GM12878 (cell line): ENCODE measurements at regions of chr2 and their contacts with region 1.

Region 1: DNA sequence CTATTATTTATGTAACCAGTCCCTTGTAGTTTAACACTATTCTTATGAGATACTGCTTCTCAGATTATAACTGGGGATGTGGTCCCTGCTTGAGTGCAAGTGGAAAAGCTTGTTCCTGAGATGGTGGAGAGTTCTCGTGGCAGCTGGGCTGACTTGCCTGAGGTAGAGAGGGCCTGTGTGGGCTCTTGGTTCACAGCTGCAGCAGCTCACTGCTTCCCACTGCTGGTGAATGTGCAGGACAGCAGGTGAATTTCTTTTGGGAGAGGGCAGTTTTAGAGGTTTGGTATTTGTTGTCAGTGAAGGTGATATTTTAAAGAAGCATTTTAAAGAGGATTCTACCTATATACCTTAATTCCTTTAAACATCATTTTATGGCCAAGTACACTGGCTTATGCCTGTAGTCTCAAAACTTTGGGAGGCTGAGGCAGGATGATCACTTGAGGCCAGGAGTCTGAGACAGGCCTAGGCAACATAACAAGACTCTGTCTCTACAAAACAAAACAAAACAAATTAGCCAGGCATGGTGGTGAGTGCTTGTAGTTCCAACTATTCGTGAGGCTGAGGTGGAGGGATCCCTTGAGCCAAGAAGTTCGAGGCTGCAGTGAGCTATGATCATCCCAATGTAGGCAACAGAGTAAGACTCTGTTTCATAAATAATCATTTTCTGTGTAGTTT is 94.8 kb downstream of the MTA3 start:
- DNase-seq: peak; percentile 46
- ATAC-seq: peak; percentile 96
- H3K4me3 ChIP-seq: no peak overlapping the region
- H3K27ac ChIP-seq: no peak overlapping the region; the same call in 1 of the 2 replicates
- H3K4me1 ChIP-seq: peaks cover 3% of the 10 kb centered on the region; the same call in 1 of the 2 replicates
- H3K27me3 ChIP-seq: no peaks in the 10 kb centered on the region
- CTCF ChIP-seq: peak; percentile 98 to 99 (median 99)
- EP300 ChIP-seq: no peak
- POLR2A ChIP-seq: no peak
- RAD21 ChIP-seq: peak; percentile 98

Region 2: DNA sequence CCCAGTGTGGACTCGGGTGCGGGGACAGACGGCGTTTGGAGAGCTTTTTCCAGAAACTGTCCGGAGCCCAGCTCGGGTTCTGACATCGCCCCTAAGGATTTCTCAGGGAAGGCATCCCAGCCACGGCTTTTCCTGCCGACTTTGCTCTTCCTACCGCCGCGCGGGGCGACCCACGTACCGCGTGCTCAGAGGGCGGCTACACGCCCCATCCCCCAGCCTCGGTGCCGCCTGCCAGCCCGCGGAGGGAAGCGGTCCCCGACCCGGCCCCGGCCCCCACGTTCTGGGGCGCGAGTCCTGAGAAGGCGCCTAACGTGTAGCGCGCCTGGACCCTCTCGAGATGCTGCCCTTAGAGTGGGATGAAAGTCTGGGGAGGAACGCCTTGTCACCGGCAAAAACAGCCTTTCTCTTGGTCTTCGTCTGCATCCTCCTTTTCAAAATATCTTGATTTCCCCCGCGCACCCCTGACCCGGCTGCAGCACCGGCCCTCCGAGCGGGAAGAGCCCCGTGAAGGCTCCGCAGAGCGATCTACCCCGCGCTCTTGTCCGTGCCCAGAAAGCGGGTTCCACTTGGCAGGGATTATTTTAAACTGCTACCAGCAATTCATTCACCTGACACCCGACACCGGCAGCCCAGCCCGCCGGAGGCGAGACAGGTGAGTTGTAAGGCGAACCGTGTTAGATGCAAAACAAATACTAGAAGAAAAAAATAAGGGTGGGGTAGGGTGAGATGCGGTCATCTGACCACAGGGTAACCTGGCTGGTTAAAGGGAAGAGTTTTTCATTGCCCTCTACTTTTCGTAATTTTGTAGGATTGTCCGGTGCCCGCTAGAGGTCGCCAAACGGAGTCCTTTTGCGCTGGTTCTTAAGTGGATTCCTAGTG is 168.6 kb before region 1 on chr2:
- CTCF ChIA-PET with region 1: interaction called, 63 read pairs
- POLR2A ChIA-PET with region 1: interaction called, 3 read pairs
- RAD21 ChIA-PET with region 1: interaction called, 25 read pairs
- SMC1A ChIA-PET with region 1: interaction called, 62 read pairs
- in situ Hi-C with region 1: loop called (anchors 5 kb)
- intact Hi-C with region 1: loop called (anchors 1 kb)
- DNase-seq: peak; percentile 35
- ATAC-seq: peak; percentile 90
- H3K4me3 ChIP-seq: peak overlapping the region; percentile 76
- H3K27ac ChIP-seq: no peak overlapping the region
- H3K4me1 ChIP-seq: no peaks in the 10 kb centered on the region
- H3K27me3 ChIP-seq: peaks cover 3 to 13% of the 10 kb centered on the region in 2 experiments
- CTCF ChIP-seq: peak; percentile 83 to 90 (median 89)
- EP300 ChIP-seq: no peak
- POLR2A ChIP-seq: no peak
- RAD21 ChIP-seq: peak; percentile 91

Region 3: DNA sequence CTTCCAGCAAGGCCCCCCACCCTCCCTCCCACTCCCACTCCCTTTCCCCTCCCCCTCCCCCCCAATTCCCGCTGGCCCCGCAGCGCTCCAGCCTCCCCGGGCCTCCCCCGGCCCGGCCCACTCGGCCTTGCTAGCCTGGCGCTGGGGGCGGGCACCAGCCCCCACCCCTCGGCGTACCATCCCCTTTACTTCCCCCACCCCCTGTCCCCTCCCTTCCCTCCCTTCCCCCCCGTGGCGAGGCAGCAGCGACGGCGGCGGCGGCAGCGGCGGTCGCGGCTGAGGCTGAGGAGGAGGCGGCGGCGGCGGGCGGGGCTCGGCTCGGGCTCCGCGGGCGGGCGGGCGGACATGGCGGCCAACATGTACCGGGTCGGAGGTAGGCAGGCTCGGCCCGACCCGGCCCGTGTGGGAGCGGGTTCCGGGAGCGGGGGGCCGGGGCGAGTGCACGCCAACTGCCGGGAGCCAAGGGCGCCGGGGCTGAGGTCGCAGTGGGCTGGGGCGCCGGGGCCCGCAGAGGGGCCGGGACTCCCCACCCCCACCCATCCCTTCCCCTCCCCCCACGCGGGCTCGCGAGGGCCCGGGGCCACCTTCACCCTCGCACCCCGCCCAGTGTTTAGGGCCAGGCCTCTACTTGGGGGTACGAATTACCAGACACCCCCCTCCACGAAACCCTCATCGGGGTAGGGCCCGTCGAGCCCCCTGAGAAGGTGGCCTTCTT is 94.7 kb before region 1 on chr2 and contains the start of gene MTA3:
- CTCF ChIA-PET with region 1: interaction called, 12 read pairs
- POLR2A ChIA-PET with region 1: interaction called, 4 read pairs
- RAD21 ChIA-PET with region 1: interaction called, 7 read pairs
- SMC1A ChIA-PET with region 1: interaction called, 8 read pairs
- in situ Hi-C with region 1: no loop called
- intact Hi-C with region 1: no loop called
- DNase-seq: no peak
- ATAC-seq: peak; percentile 79
- H3K4me3 ChIP-seq: peak within 1 kb of the TSS; percentile 76
- H3K27ac ChIP-seq: peak within 1 kb of the TSS; percentile 80
- H3K4me1 ChIP-seq: peaks cover 24% of the 10 kb centered on the region
- H3K27me3 ChIP-seq: no peaks in the 10 kb centered on the region
- CTCF ChIP-seq: no peak
- EP300 ChIP-seq: no peak
- POLR2A ChIP-seq: peak; percentile 63; the same call in 1 of the 2 replicates
- RAD21 ChIP-seq: no peak
- polyA plus RNA-seq, gene MTA3: 17.6 to 21.5 TPM

Region 4: DNA sequence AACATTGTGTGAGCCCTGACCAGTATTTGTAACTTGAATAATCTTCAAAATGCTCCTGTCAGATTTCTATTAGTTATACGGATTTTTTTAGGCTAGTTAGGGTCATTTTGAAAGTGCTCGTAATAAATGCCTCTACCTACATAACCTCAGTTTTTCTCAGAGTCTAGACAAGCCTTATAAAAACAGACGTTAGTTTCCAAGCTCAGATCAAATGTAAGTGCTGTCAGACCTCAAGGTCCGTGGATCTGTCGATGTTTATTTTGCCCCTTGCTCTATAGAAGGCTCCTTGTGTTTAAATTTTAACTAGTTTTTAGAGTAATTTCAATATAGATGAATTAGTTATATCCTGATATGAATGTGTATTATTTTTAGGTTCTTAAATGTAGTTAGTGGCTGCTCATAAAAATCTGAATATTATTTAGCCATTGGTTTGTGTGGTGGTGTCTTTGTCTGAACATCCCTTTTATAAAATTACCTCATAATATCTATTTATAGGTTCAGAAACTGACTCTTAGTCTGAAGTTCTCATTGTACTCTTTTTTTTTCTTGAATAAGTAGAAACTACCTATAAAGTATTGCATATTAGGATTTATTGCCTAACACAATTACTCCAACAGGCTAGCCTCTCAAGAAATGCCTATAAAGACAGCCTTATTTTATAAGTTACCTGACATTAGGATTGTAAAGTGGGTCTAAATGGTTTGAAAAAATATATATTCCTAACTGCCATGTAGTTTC is 23.7 kb before region 1 on chr2:
- CTCF ChIA-PET with region 1: interaction called, 22 read pairs
- POLR2A ChIA-PET with region 1: interaction called, 4 read pairs
- RAD21 ChIA-PET with region 1: interaction called, 21 read pairs
- SMC1A ChIA-PET with region 1: interaction called, 24 read pairs
- in situ Hi-C with region 1: no loop called
- intact Hi-C with region 1: no loop called
- DNase-seq: no peak
- ATAC-seq: peak; percentile 81
- H3K4me3 ChIP-seq: no peak overlapping the region
- H3K27ac ChIP-seq: peak overlapping the region; percentile 43; the same call in 1 of the 2 replicates
- H3K4me1 ChIP-seq: peaks cover 4% of the 10 kb centered on the region
- H3K27me3 ChIP-seq: no peaks in the 10 kb centered on the region
- CTCF ChIP-seq: no peak
- EP300 ChIP-seq: no peak
- POLR2A ChIP-seq: no peak
- RAD21 ChIP-seq: no peak

Region 5: DNA sequence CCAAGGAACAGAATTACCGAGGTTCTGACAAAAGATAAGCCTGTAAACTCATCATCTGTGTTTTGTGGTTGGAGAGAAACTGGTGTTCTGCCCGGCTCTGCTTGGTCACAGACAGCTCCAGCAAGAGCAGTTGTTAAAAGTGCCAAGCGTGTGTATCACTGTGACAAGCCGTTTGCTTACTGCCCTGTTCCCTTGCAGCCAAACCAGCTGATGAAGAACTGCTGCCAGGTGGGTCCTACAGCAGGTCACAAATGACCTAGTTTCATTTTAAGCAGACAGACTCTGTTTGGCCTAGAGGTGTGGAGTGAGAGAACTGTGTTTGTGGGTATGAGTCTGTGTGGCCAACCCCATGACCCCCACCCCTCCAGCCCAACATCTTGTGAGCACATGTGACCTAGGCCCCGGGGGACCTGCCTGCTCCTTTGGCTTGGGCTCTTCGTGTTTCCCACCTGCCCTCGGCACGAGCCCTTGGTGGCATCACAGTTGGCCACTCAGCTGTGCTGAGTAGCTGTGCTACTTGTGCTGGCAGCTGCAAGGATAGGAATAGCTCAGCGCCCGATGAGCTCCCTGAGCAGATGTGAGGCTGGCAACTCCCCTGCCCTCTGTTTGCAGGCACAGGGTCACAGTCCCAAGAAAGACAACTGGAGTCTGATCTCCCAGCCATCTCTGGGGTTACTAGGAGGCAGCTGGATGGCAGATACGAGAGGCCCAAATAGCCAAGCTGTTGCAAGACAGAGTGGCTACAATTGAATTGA is 91.0 kb after region 1 on chr2:
- CTCF ChIA-PET with region 1: interaction called, 11 read pairs
- POLR2A ChIA-PET with region 1: interaction called, 3 read pairs
- RAD21 ChIA-PET with region 1: interaction called, 8 read pairs
- SMC1A ChIA-PET with region 1: interaction called, 11 read pairs
- in situ Hi-C with region 1: no loop called
- intact Hi-C with region 1: no loop called
- DNase-seq: peak; percentile 76
- ATAC-seq: peak; percentile 80
- H3K4me3 ChIP-seq: no peak overlapping the region
- H3K27ac ChIP-seq: peak overlapping the region; percentile 24
- H3K4me1 ChIP-seq: peaks cover 52% of the 10 kb centered on the region
- H3K27me3 ChIP-seq: no peaks in the 10 kb centered on the region
- CTCF ChIP-seq: no peak
- EP300 ChIP-seq: peak; percentile 27 to 63; a peak in 1 of 4 replicates
- POLR2A ChIP-seq: no peak
- RAD21 ChIP-seq: no peak

Region 6: DNA sequence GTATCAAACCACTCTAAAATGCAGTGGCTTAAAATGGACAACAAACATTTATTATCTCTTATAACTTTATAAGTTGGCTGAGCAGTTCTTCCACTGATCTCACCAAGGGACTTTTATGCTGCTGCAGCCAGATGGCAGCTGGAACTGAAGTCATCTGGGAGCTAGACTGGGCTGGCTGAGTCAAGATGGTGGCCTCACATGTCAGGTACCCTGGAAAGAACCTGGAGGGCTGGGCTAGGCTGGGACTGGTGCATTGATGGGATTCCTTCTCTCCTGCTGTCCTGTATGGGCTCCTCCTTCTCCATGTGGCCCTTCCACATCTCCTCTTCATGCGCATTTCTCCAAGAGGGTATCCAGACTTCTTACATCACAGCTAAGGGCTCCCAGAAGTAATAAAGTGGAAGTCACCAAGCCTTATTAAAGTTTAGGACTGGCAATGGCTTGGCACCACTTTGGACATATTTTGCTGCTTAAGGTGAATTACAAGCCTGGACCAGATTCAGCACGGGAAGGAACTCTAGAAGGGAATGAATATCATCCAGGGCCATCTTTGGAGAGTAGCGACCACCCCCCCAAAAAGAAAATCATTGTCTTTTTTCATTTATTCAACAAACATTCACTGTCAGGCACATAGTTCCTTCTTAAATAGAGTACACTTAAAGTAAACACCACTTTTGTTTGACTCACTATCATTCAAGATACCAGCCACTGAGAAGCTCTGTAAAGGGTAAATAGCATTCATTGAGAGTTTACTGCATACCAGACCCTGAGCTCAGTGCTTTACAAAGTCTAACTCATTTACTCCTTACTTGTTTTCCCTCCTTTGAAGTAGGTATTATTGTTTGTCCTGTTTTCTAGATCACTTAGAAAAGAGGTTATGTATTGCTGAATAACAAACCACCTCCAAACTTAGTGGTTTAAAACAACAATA is 425.2 kb after region 1 on chr2:
- CTCF ChIA-PET with region 1: no interaction called
- POLR2A ChIA-PET with region 1: no interaction called
- RAD21 ChIA-PET with region 1: no interaction called
- SMC1A ChIA-PET with region 1: no interaction called
- in situ Hi-C with region 1: no loop called
- intact Hi-C with region 1: no loop called
- DNase-seq: no peak
- ATAC-seq: no peak
- H3K4me3 ChIP-seq: no peak overlapping the region
- H3K27ac ChIP-seq: no peak overlapping the region
- H3K4me1 ChIP-seq: no peaks in the 10 kb centered on the region
- H3K27me3 ChIP-seq: no peaks in the 10 kb centered on the region
- CTCF ChIP-seq: no peak
- EP300 ChIP-seq: no peak
- POLR2A ChIP-seq: no peak
- RAD21 ChIP-seq: no peak